Activated CD8-positive, alpha-beta T cell treated with anti-CD3 and anti-CD28 coated beads for 36 hours (primary cell): ENCODE measurements at regions of chr4 and their contacts with region 1.

Region 1: DNA sequence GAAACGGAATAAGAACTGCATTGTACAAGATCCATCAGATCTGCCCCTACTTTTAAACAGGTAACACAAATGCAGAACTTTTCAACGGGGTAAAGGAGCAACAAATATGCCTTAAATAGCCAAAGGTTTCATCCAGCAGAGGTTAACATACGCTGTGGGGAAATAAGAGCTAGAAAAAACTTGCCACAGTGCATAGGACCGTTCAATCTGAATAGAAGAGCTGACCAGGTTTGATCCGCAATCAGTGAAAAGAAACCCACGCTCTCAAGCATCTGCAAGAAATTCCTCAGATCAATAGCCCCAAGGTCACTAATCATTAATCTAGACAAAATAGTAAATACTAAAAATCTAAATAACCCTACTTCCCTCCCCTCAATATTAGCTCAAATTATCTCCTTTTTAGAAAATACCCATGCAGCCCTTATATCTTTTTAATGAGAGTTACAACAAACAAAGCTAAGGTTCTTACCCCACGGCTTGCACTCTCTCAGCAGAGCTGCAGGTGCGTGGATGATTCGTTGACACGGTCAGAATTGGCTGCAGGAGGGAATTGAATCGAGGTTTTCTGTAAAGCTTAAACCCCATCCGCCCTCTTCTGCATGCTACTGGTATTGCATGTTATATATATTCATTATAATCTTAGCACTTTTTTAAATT is at the start of gene TLR10:
- DNase-seq: peak; percentile 57
- ATAC-seq: peak; percentile 92
- H3K4me3 Mint-ChIP-seq: no peak within 1 kb of the TSS
- H3K27ac Mint-ChIP-seq: no peak within 1 kb of the TSS
- H3K4me1 Mint-ChIP-seq: peaks cover 4% of the 10 kb centered on the region
- H3K27me3 Mint-ChIP-seq: no peaks in the 10 kb centered on the region
- CTCF ChIP-seq: peak; percentile 76
- total RNA-seq, gene TLR10: 0.11 to 0.22 TPM

Region 2: GRCh38 chr4:38768968-38769394 is 13.6 kb before region 1 on chr4:
- CTCF ChIA-PET with region 1: interaction called, 151 read pairs
- POLR2A ChIA-PET with region 1: no interaction called
- intact Hi-C with region 1: no loop called
- DNase-seq: no peak
- ATAC-seq: no peak
- H3K4me3 Mint-ChIP-seq: no peak overlapping the region
- H3K27ac Mint-ChIP-seq: no peak overlapping the region
- H3K4me1 Mint-ChIP-seq: no peaks in the 10 kb centered on the region
- H3K27me3 Mint-ChIP-seq: peaks cover 3% of the 10 kb centered on the region
- CTCF ChIP-seq: no peak